ENCODE measurements at regions of chr6 and their contacts with region 1.

Region 1: DNA sequence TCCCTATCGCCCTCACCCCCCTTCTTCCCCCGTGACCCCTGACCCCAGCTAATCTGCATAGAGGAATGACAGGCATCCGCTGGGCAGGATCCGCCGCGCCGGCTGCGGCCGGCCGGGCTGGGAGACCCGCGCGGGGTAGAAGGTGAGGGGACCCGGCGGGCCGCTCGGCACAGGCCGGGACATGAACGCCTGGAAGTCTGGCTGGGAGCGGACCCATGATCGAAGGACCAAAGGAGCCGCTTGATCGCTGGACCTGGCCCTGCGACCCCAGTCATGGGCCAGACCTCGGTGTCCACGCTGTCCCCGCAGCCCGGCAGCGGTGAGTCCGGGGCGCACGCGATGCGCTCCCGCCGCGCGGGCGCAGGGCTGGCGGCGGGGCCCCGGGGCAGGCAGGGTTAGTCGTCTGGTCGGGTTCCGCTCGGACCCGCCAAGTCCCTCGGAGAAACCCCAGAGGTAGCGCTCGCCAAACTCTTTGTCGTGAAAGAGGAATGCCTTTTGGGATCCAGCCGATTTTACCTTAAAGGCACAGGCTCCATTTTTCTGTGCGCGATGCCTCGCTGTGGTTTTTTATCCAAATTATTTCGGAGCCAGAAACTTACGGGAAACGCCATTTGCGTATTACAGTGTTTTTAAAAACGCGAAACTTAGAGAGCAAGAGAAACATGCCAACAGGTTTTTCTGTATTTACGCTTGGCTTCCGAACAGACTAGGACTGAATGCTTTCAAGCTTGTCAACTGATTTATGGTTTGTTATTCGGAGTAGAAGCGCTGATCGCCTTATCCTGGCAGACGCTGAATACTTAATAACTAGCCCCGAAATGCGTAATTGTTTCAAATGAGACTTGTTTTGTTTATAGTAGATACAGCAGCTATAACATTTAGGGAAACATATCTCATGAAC is at the start of gene PHACTR2:
- DNase-seq: peak; percentile 71
- ATAC-seq: peak; percentile 84
- H3K4me3 ChIP-seq: peak within 1 kb of the TSS; percentile 97
- H3K27ac ChIP-seq: peak within 1 kb of the TSS; percentile 99
- H3K4me1 ChIP-seq: peaks cover 9% of the 10 kb centered on the region
- H3K27me3 ChIP-seq: no peaks in the 10 kb centered on the region
- CTCF ChIP-seq: no peak
- POLR2A ChIP-seq: no peak
- RAD21 ChIP-seq: no peak
- total RNA-seq, gene PHACTR2: 74.2 and 76.9 TPM in 2 replicates

Region 2: DNA sequence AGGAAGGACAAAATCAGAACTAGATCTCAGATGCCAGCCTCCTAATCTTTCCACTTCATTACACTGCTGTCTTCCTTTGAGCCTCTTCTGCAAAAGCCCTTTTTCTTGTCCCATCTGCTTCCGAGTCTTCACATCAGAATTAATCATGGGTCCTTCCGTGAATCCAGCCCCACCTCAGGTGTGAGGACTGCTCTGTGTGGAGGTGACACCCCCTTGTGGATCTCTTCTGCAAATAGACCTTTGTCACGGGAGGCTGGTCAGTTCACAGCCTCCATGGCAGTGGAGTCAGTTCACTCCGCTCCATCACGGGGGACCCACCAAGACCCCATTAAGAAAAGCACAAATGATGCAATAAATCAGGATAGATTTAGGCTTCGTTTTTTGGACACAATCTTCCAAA is 398.8 kb before region 1 on chr6:
- CTCF ChIA-PET with region 1: no interaction called
- POLR2A ChIA-PET with region 1: no interaction called
- dilution Hi-C with region 1: no loop called
- in situ Hi-C with region 1: no loop called
- intact Hi-C with region 1: no loop called
- DNase-seq: peak; percentile 21
- ATAC-seq: no peak
- H3K4me3 ChIP-seq: no peak overlapping the region
- H3K27ac ChIP-seq: no peak overlapping the region
- H3K4me1 ChIP-seq: no peaks in the 10 kb centered on the region
- H3K27me3 ChIP-seq: no peaks in the 10 kb centered on the region
- CTCF ChIP-seq: peak; percentile 27; the same call in 1 of the 2 replicates
- POLR2A ChIP-seq: no peak
- RAD21 ChIP-seq: peak; percentile 57

Region 3: GRCh38 chr6:143583542-143584327 is 94.4 kb before region 1 on chr6:
- CTCF ChIA-PET with region 1: no interaction called
- POLR2A ChIA-PET with region 1: no interaction called
- dilution Hi-C with region 1: no loop called
- in situ Hi-C with region 1: no loop called
- intact Hi-C with region 1: no loop called
- DNase-seq: peak; percentile 91
- ATAC-seq: peak; percentile 87
- H3K4me3 ChIP-seq: no peak overlapping the region
- H3K27ac ChIP-seq: peak overlapping the region; percentile 68; the same call in 1 of the 2 replicates
- H3K4me1 ChIP-seq: peaks cover 2% of the 10 kb centered on the region
- H3K27me3 ChIP-seq: no peaks in the 10 kb centered on the region
- CTCF ChIP-seq: no peak
- POLR2A ChIP-seq: no peak
- RAD21 ChIP-seq: no peak

Region 4: GRCh38 chr6:143615785-143616184 is 62.4 kb before region 1 on chr6:
- CTCF ChIA-PET with region 1: no interaction called
- POLR2A ChIA-PET with region 1: no interaction called
- dilution Hi-C with region 1: no loop called
- in situ Hi-C with region 1: no loop called
- intact Hi-C with region 1: no loop called
- DNase-seq: no peak
- ATAC-seq: no peak
- H3K4me3 ChIP-seq: no peak overlapping the region
- H3K27ac ChIP-seq: no peak overlapping the region
- H3K4me1 ChIP-seq: peaks cover 8% of the 10 kb centered on the region
- H3K27me3 ChIP-seq: no peaks in the 10 kb centered on the region
- CTCF ChIP-seq: no peak
- POLR2A ChIP-seq: no peak
- RAD21 ChIP-seq: no peak

Region 5: DNA sequence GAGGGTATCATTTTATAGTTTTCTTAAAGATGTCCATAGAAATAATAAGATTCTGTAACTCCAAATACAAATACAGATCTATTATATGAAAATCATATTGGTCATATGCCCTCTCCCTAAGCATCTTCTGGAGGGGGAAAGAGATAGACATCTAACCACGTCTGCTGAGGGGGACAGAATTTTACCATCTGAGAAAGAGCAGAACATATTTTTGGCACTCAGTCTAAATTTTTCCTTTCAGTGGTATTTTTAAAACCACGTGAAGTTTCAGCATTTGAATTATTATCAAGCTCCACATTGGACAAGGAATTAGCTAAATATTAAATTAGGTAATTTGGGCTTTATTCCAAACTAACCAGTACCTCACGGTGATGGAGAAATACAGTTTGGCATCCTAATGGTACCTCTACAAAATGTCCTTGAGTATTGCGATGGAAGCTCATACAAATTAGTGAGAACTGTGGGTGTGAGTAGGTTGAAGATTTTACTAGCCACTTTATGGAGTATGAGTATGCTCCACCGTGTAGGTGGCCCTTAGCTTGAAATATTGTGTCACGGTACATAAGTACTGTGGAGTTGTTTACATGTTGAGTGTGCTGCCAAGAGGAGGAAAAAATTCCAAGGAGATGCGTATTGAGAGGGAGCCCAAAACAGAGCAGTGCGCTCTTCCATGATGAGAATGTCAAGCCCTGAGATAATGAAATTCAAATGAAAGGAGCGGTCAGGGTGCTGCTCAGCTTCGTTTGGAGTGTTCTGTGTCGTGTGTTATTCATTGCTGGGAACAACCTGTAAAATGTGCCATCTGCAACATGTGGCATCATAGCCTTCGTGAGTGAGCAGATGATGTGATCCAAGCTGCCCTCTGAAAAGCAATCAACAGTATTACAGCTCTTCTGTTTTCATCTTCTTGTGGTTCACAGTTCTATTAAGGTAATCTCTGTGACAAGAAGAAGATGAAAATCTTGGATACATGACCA is 48.7 kb before region 1 on chr6:
- CTCF ChIA-PET with region 1: no interaction called
- POLR2A ChIA-PET with region 1: no interaction called
- dilution Hi-C with region 1: no loop called
- in situ Hi-C with region 1: no loop called
- intact Hi-C with region 1: loop called (anchors 5 kb)
- DNase-seq: peak; percentile 80
- ATAC-seq: peak; percentile 83
- H3K4me3 ChIP-seq: no peak overlapping the region
- H3K27ac ChIP-seq: no peak overlapping the region
- H3K4me1 ChIP-seq: 0 out of 2 replicates have a peak, but pooled peaks cover 1% of the 10 kb centered on the region
- H3K27me3 ChIP-seq: no peaks in the 10 kb centered on the region
- CTCF ChIP-seq: no peak
- POLR2A ChIP-seq: no peak
- RAD21 ChIP-seq: no peak

Region 6: GRCh38 chr6:143745166-143746133 is 67.3 kb after region 1 on chr6:
- CTCF ChIA-PET with region 1: no interaction called
- POLR2A ChIA-PET with region 1: no interaction called
- dilution Hi-C with region 1: no loop called
- in situ Hi-C with region 1: no loop called
- intact Hi-C with region 1: loop called (anchors 2 kb)
- DNase-seq: peak; percentile 76
- ATAC-seq: peak; percentile 87
- H3K4me3 ChIP-seq: peak overlapping the region; percentile 12; the same call in 1 of the 2 replicates
- H3K27ac ChIP-seq: peak overlapping the region; percentile 88
- H3K4me1 ChIP-seq: peaks cover 27% of the 10 kb centered on the region
- H3K27me3 ChIP-seq: no peaks in the 10 kb centered on the region
- CTCF ChIP-seq: no peak
- POLR2A ChIP-seq: no peak
- RAD21 ChIP-seq: no peak

Region 7: GRCh38 chr6:143842902-143843676 is 164.9 kb after region 1 on chr6 and contains the start of gene LTV1:
- CTCF ChIA-PET with region 1: no interaction called
- POLR2A ChIA-PET with region 1: no interaction called
- dilution Hi-C with region 1: no loop called
- in situ Hi-C with region 1: no loop called
- intact Hi-C with region 1: loop called (anchors 2 kb)
- DNase-seq: peak; percentile 96
- ATAC-seq: peak; percentile 99
- H3K4me3 ChIP-seq: peak within 1 kb of the TSS; percentile 86
- H3K27ac ChIP-seq: peak within 1 kb of the TSS; percentile 88
- H3K4me1 ChIP-seq: peaks cover 3% of the 10 kb centered on the region; the same call in 1 of the 2 replicates
- H3K27me3 ChIP-seq: no peaks in the 10 kb centered on the region
- CTCF ChIP-seq: no peak
- POLR2A ChIP-seq: peak; percentile 89
- RAD21 ChIP-seq: no peak
- total RNA-seq, gene LTV1: 11.1 and 26.1 TPM in 2 replicates

Region 8: GRCh38 chr6:144013486-144013909 is 335.4 kb after region 1 on chr6:
- CTCF ChIA-PET with region 1: interaction called, 3 read pairs
- POLR2A ChIA-PET with region 1: no interaction called
- dilution Hi-C with region 1: no loop called
- in situ Hi-C with region 1: no loop called
- intact Hi-C with region 1: loop called (anchors 5 kb)
- DNase-seq: peak; percentile 71
- ATAC-seq: peak; percentile 90
- H3K4me3 ChIP-seq: no peak overlapping the region
- H3K27ac ChIP-seq: no peak overlapping the region
- H3K4me1 ChIP-seq: peaks cover 2% of the 10 kb centered on the region; the same call in 1 of the 2 replicates
- H3K27me3 ChIP-seq: peaks cover 2% of the 10 kb centered on the region
- CTCF ChIP-seq: peak; percentile 93
- POLR2A ChIP-seq: no peak
- RAD21 ChIP-seq: peak; percentile 93

Measured in IMR-90 (cell line).